Activated CD8-positive, alpha-beta T cell treated with anti-CD3 and anti-CD28 coated beads for 36 hours (primary cell): ENCODE measurements at regions of chr1 and their contacts with region 1.

Region 1: DNA sequence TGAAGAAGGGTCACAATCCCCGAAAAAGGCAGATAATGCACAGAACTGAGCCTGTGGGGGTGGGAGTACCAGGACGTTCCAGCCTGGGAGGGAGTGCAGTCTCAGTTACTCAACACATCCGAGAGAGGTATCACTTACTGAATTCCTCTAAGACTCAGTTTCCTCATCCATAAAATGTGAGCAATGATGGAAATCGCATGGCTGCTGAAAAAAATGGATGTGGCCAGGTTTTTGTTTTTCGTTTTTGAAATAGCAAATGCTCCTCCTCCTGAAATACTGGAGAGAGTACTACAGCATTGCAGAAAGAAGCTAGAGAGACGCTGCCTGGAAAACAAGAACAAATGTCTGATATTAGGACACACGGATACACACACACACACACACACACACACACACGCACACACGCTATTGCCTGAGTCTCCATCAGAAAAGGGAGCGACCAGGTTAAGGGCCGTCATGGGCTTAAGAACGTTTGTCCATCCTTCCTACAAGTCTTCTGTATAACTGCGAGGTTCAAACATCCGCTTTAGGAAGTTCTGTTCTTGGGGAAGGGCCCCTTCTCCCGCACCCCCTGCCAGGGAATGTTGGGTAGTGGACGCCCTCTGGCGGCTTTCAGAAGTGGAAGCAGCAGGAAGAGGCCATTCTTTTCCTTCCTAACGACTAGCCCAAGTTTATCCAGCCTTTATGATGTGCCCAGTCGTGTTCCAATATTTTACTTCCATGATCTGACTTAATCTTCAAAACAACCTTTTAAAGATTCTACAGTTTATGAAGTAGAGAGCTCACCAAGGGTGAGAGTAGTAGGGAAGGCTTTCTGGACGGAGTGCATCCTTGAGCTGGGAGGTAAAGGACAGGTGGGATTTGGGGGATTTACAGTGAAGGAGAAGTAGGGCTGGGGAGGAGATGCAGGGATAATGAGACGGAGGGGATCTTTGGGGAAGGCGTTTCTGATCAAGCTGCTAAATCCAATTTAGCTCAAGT is 699 bp upstream of the NES start:
- DNase-seq: peak; percentile 53
- ATAC-seq: peak; percentile 45
- H3K4me3 Mint-ChIP-seq: no peak overlapping the region
- H3K27ac Mint-ChIP-seq: no peak overlapping the region
- H3K4me1 Mint-ChIP-seq: peaks cover 14% of the 10 kb centered on the region
- H3K27me3 Mint-ChIP-seq: peaks cover 59% of the 10 kb centered on the region
- CTCF ChIP-seq: peak; percentile 82

Region 2: GRCh38 chr1:156641761-156642264 is 36.1 kb before region 1 on chr1 and contains the start of gene BCAN:
- CTCF ChIA-PET with region 1: interaction called, 13 read pairs
- POLR2A ChIA-PET with region 1: no interaction called
- intact Hi-C with region 1: no loop called
- DNase-seq: peak; percentile 41
- ATAC-seq: peak; percentile 26
- H3K4me3 Mint-ChIP-seq: peak within 1 kb of the TSS; percentile 10
- H3K27ac Mint-ChIP-seq: no peak within 1 kb of the TSS
- H3K4me1 Mint-ChIP-seq: peaks cover 20% of the 10 kb centered on the region
- H3K27me3 Mint-ChIP-seq: peaks cover 78% of the 10 kb centered on the region
- CTCF ChIP-seq: no peak
- total RNA-seq, gene BCAN: not detected

Region 3: DNA sequence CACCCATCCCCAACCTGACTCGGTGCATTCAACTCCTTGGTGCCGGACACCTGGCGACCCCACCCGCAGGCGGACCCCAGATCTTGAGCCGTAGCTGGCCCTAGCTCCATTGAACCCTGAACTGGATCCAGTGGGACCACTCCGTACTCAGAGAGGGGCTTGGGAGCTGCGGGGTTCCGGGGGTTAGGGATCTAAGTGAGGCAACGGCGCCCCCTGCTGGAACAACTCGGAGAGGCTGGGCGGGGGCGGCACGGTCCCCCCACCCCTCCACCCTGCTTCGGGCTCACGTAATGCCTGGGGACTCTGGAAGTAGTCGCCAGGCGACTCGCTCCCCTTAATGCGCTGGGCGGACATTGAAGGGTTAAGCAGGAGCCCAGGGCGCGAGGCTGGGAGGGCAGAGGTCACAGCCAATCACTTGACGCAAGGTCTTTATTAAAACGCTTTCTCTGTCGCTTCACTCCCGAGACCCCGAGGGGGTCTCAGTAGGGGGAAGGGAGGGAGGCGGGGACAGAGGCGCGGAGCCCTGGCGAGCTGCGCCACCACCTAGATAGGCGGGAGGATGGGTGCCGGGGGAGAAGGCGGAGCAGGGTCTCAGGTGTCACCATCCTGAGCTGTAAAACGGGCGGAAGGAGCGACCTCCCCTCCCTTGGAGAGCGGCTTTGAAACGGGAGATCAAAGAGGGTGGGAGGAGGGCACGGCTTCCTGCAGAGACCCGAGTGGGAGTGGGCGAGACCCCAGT is 28.2 kb after region 1 on chr1:
- CTCF ChIA-PET with region 1: interaction called, 13 read pairs
- POLR2A ChIA-PET with region 1: interaction called, 3 read pairs
- intact Hi-C with region 1: no loop called
- DNase-seq: peak; percentile 87
- ATAC-seq: peak; percentile 67
- H3K4me3 Mint-ChIP-seq: peak overlapping the region; percentile 75
- H3K27ac Mint-ChIP-seq: peak overlapping the region; percentile 75
- H3K4me1 Mint-ChIP-seq: peaks cover 34% of the 10 kb centered on the region
- H3K27me3 Mint-ChIP-seq: peaks cover 19% of the 10 kb centered on the region
- CTCF ChIP-seq: peak; percentile 99